Natural killer cell (primary cell): ENCODE measurements at regions of chr11 and their contacts with region 1.

Region 1: DNA sequence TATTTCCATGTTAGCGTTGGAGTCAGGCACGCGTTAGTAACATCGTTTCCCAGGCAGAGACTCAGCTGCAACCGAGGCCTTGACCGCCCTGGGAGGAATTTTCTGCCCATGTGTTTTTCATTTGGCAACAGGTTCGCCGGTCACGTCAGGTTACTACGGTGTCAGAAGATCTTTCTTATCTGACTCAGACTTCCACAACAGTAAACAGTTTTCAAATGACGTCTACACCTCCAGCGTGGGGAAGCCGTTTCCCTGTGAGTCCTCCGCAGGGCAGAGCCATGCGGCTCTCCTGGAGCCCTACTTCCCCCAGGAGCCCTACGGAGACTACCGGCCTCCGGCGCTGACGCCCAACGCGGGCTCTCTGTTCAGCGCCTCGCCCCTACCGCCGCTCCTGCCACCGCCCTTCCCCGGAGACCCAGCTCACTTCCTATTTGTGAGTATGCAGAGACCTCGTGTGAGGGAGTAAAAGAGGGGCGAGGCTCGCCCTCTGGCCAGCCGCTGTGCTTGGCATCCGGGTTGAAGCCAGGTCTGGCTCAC is 14.3 kb upstream of the POU2AF3 start:
- DNase-seq: no peak
- ATAC-seq: no peak
- H3K4me3 ChIP-seq: no peak overlapping the region
- H3K4me3 Mint-ChIP-seq: no peak overlapping the region
- H3K27ac ChIP-seq: no peak overlapping the region
- H3K27ac Mint-ChIP-seq: no peak overlapping the region
- H3K4me1 ChIP-seq: no peaks in the 10 kb centered on the region
- H3K4me1 Mint-ChIP-seq: no peaks in the 10 kb centered on the region
- H3K27me3 ChIP-seq: no peaks in the 10 kb centered on the region
- H3K27me3 Mint-ChIP-seq: peaks cover 5 to 11% of the 10 kb centered on the region in 2 donors
- CTCF ChIP-seq: no peak

Region 2: GRCh38 chr11:111446404-111447111 is 162.5 kb after region 1 on chr11:
- intact Hi-C with region 1: loop called (anchors 1 kb)
- DNase-seq: peak; percentile 58 to 93
- ATAC-seq: peak; percentile 96 to 99 (median 99)
- H3K4me3 ChIP-seq: no peak overlapping the region
- H3K4me3 Mint-ChIP-seq: peak overlapping the region; percentile 2
- H3K27ac ChIP-seq: peak overlapping the region; percentile 17
- H3K27ac Mint-ChIP-seq: peak overlapping the region; percentile 19 to 59
- H3K4me1 ChIP-seq: peaks cover 21% of the 10 kb centered on the region
- H3K4me1 Mint-ChIP-seq: peaks cover 17% of the 10 kb centered on the region in 2 donors
- H3K27me3 ChIP-seq: no peaks in the 10 kb centered on the region
- H3K27me3 Mint-ChIP-seq: peaks cover 0 to 5% of the 10 kb centered on the region in 2 donors
- CTCF ChIP-seq: peak; percentile 64